Mucosa of descending colon (tissue), 3 donors: ENCODE measurements at regions of chr16 and their contacts with region 1.

Region 1: DNA sequence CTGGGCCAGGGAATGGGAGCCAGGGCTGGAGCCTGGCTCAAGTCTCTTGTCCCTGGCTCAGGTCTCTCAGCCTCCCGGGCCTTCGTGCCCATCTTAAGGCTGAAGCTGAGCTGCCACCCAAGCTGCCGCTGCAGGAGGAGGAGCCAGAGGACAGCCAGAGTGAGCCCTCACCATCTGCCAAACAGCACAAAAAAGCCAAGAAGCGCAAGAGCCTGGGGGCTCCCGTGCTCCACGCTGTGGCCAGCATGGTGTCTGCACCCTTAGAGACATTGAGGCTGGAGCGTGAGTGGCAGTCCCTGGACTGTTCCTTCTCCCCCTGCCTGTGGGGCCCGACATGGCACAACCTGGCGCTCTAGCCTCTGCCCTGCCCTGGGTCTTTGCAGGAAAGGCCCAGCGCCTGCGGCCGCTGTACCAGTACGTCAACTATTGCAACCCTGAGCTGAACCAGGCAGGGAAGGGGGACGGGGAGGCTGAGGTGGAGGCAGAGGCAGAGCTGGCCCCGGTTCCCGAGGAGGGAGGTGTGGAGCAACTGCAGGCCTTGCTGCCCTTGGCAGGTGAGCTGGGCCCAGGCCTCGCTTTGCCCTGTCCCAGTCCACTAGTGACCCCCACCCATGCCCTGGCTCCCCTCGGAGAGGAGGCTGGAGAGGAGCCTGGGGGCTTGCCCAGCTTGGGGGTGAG is 1.3 kb downstream of the C16orf86 start:
- DNase-seq: peak; percentile 83 to 89 (median 86)
- ATAC-seq: peak; percentile 84
- H3K4me3 ChIP-seq: no peak overlapping the region
- H3K4me1 ChIP-seq: peaks cover 12% of the 10 kb centered on the region
- CTCF ChIP-seq: peak; percentile 71

Region 2: GRCh38 chr16:67546761-67547422 is 121.1 kb before region 1 on chr16:
- intact Hi-C with region 1: loop called in 1 of 2 experiments (anchors 10 kb)
- DNase-seq: peak; percentile 85 to 92 (median 90)
- ATAC-seq: peak; percentile 89
- H3K4me3 ChIP-seq: no peak overlapping the region
- H3K4me1 ChIP-seq: peaks cover 15% of the 10 kb centered on the region
- CTCF ChIP-seq: peak; percentile 93